Activated T-helper 1 cell treated with anti-CD3 and anti-CD28 coated beads, Interleukin-12 subunit alpha, Interleukin-12 subunit beta, Interleukin-2, Interleukin-4 antibody, amounts not matched to agents 30 ng/mL and 10 ng/mL and 1 ng/mL, durations not matched to agents 14 hours and 24 hours and 36 hours (primary cell): ENCODE measurements at regions of chr2 and their contacts with region 1.

Region 1: DNA sequence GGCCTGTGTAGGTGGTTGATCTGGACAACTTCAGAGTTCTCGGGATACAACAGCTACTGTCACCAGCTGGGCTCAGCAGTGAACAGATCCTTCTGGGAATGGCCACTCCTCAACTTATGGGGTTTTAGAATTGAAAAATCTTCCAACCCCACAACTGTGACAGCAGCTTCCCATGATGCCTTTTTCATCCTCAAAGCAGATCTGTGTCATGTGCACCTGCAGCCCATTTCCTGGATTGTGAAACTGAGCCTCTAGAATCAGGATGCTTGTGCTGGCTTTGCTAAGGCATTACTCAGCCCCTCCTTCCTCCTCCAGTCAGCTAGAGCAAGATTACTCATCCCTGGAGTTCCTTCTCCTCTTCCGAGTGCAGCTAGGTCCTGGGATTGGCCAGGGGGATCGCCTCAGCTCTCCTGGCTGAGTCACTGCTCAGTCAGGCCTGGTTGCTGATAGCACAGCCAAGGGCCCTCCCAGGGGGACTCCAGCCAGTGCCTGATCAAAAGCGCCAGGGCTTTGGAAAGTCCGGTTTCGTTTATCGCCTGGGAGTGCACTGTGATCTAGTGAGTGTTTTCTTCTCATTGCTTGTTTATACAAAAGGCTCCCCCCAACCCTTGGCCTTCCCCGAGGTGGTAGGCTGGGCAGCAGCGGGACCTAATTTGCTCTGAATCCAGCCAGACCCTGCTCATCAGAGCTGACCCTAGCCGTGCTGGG is 2.4 kb upstream of the LPIN1 start:
- DNase-seq: peak; percentile 67
- H3K4me3 Mint-ChIP-seq: peak overlapping the region; percentile 0
- H3K27ac Mint-ChIP-seq: peak overlapping the region; percentile 79
- H3K4me1 Mint-ChIP-seq: peaks cover 55% of the 10 kb centered on the region
- H3K27me3 Mint-ChIP-seq: peaks cover 3% of the 10 kb centered on the region

Region 2: GRCh38 chr2:11154923-11155380 is 589.0 kb before region 1 on chr2:
- intact Hi-C with region 1: loop called (anchors 1 kb)
- DNase-seq: peak; percentile 94
- H3K4me3 Mint-ChIP-seq: peak overlapping the region; percentile 85
- H3K27ac Mint-ChIP-seq: peak overlapping the region; percentile 83
- H3K4me1 Mint-ChIP-seq: peaks cover 12% of the 10 kb centered on the region
- H3K27me3 Mint-ChIP-seq: peaks cover 7% of the 10 kb centered on the region

Region 3: GRCh38 chr2:11688222-11689069 is 55.6 kb before region 1 on chr2:
- intact Hi-C with region 1: loop called (anchors 1 kb)
- DNase-seq: peak; percentile 78
- H3K4me3 Mint-ChIP-seq: peak overlapping the region; percentile 37
- H3K27ac Mint-ChIP-seq: no peak overlapping the region
- H3K4me1 Mint-ChIP-seq: peaks cover 10% of the 10 kb centered on the region
- H3K27me3 Mint-ChIP-seq: peaks cover 26% of the 10 kb centered on the region

Region 4: GRCh38 chr2:11753886-11754699 is 10.1 kb after region 1 on chr2:
- intact Hi-C with region 1: loop called (anchors 1 kb)
- DNase-seq: peak; percentile 57
- H3K4me3 Mint-ChIP-seq: peak overlapping the region; percentile 69
- H3K27ac Mint-ChIP-seq: peak overlapping the region; percentile 82
- H3K4me1 Mint-ChIP-seq: peaks cover 85% of the 10 kb centered on the region
- H3K27me3 Mint-ChIP-seq: no peaks in the 10 kb centered on the region

Region 5: DNA sequence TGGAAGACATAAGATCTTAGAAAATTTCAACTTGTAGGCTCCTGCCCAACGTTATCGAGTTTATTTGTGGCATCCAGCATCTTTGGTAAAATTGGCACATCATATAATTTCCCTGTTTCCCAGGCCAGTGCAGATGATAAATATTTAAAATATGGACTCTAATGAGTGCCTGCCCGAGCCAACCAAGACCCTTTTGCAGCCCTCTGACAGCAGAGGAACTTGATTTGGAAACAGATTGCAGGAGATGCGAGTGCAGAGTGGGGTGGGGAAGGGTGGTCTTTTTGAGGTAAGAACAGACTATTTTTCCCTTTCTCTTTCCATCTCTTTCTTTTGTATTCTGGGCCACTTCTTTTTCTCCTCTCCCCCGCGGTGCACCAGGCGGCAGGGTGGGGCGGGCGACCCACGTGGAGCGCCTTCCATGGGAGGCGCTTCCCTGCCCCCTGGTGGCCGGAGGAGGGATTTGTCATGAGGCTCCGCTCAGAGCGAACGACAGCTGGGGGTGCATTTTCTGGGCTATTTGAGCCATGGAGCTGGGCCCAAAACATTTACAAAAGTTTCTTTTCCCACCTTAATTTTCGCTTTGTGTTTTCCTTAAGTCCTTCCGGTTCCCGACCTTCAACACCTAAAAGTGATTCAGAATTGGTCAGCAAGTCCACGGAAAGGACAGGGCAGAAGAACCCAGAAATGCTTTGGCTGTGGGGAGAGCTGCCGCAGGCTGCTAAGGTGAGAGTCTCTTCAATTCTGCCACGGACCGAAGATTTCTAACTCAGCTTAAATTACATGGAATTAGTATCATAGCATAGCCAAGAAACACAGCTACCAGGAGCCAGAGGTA is 35.1 kb after region 1 on chr2:
- intact Hi-C with region 1: loop called (anchors 1 kb)
- DNase-seq: peak; percentile 75
- H3K4me3 Mint-ChIP-seq: peak overlapping the region; percentile 76
- H3K27ac Mint-ChIP-seq: peak overlapping the region; percentile 80
- H3K4me1 Mint-ChIP-seq: peaks cover 46% of the 10 kb centered on the region
- H3K27me3 Mint-ChIP-seq: no peaks in the 10 kb centered on the region

Region 6: GRCh38 chr2:11930211-11930761 is 186.3 kb after region 1 on chr2:
- intact Hi-C with region 1: no loop called
- DNase-seq: no peak
- H3K4me3 Mint-ChIP-seq: no peak overlapping the region
- H3K27ac Mint-ChIP-seq: no peak overlapping the region
- H3K4me1 Mint-ChIP-seq: no peaks in the 10 kb centered on the region
- H3K27me3 Mint-ChIP-seq: peaks cover 4% of the 10 kb centered on the region